GM13976 (cell line): ENCODE measurements at regions of chr6 and their contacts with region 1.

Region 1: DNA sequence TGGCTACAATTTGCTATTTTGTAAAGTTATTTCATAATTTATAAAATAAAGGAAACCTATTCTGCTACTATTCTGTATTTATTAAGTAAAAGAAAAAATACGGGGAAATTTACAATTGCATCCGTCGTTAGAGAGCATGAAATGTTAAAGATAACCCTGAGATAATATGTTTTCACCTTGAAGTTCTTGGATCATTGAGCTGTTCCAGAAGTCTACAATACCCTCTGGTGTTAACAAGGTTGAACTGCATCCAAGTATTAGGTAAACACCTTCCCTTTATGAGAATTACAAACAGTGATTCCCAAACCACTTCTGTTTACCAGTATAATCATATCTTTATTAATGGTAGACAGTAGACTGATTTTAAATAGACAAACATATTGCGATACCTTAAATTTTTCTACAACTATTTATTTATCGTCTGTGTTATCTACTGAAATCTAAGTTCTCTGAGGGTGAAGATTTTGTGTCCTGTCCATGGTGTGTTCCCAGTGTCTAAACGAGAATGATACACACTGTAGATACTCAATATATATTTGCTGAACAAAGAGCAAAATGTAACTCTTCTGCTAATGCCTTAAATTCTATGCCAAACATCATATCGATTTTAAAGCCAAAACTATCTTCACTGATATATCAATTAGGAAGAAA is 28.2 kb downstream of the TBC1D32 start:
- DNase-seq: peak; percentile 32
- CTCF ChIP-seq: peak; percentile 57

Region 2: GRCh38 chr6:121055572-121056163 is 250.4 kb before region 1 on chr6:
- in situ Hi-C with region 1: loop called (anchors 25 kb)
- DNase-seq: peak; percentile 16
- CTCF ChIP-seq: peak; percentile 44

Region 3: GRCh38 chr6:121105461-121105860 is 200.6 kb before region 1 on chr6:
- in situ Hi-C with region 1: no loop called
- DNase-seq: no peak
- CTCF ChIP-seq: no peak

Region 4: DNA sequence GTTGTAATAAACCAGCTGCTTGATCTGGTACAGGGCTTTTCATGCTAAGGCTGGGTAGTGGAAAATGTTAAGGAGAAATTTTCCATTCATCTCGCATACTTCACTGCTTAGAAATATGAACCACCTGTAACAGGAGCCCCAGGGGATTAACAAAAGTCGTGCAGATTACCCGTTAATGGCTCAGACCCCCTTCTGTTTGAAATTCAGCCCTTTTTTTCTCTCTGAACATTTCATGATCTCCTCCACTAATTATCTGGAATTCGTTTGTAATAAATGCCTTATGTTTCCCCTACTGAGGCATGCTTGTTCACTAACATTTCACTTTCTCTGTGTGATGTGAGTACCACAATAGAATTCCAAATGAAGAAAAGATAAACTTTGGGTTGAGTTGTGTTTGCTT is 757.0 kb after region 1 on chr6:
- in situ Hi-C with region 1: no loop called
- DNase-seq: no peak
- CTCF ChIP-seq: no peak